Activated CD4-positive, alpha-beta T cell treated with anti-CD3 and anti-CD28 coated beads for 36 hours (primary cell): ENCODE measurements at regions of chr7 and their contacts with region 1.

Region 1: DNA sequence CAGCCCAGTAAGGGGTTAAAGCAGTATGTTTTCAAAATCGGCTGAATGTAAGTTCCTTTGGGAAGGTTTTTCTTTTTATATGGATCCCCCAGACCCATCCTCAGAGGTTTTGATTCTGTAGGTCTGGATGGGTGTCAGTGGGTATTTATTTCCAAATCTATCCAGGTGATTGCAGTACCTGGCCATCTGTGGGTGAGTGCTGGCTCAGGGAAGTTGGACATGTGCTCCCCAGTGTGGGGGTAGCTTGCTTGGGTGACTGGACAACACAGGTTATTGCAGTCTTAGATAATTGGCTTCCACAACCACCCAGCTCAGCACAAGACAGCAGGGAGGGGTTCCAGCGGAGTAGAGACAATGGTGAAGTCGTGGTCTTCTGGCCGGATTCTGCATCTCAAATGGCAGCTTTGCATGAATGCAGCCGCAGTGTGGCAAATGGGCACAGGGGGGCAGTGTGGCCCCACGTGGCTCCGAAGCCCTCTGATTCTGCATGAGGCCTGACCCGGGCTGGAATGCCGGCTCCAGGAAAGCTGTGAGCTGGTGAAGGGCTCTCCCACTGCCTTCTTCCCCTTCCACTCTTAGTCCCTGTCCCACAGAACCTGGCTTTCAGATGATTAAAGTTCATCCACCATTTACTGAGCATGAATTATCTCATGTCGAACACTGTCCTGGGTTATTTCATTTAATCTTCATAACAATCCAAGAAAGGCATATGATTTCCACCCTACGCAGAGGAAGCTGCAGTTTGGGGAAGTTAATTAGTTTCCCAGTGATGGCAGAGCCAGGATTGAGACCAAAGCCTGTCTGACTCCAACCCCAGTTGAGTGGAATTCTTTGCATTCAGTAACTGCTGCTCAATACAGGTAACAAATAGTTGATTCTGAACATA is 64.5 kb upstream of the SYPL1 start:
- DNase-seq: peak; percentile 86
- ATAC-seq: peak; percentile 91
- H3K4me3 Mint-ChIP-seq: no peak overlapping the region
- H3K27ac Mint-ChIP-seq: peak overlapping the region; percentile 4
- H3K4me1 Mint-ChIP-seq: peaks cover 2% of the 10 kb centered on the region
- H3K27me3 Mint-ChIP-seq: peaks cover 10% of the 10 kb centered on the region

Region 2: GRCh38 chr7:105896407-105896911 is 280.2 kb before region 1 on chr7:
- CTCF ChIA-PET with region 1: no interaction called
- POLR2A ChIA-PET with region 1: no interaction called
- intact Hi-C with region 1: no loop called
- DNase-seq: no peak
- ATAC-seq: no peak
- H3K4me3 Mint-ChIP-seq: no peak overlapping the region
- H3K27ac Mint-ChIP-seq: no peak overlapping the region
- H3K4me1 Mint-ChIP-seq: peaks cover 11% of the 10 kb centered on the region
- H3K27me3 Mint-ChIP-seq: peaks cover 3% of the 10 kb centered on the region

Region 3: GRCh38 chr7:106074265-106074664 is 102.4 kb before region 1 on chr7:
- CTCF ChIA-PET with region 1: no interaction called
- POLR2A ChIA-PET with region 1: no interaction called
- intact Hi-C with region 1: no loop called
- DNase-seq: no peak
- ATAC-seq: no peak
- H3K4me3 Mint-ChIP-seq: no peak overlapping the region
- H3K27ac Mint-ChIP-seq: no peak overlapping the region
- H3K4me1 Mint-ChIP-seq: peaks cover 38% of the 10 kb centered on the region
- H3K27me3 Mint-ChIP-seq: no peaks in the 10 kb centered on the region

Region 4: GRCh38 chr7:106367018-106367420 is 190.4 kb after region 1 on chr7:
- CTCF ChIA-PET with region 1: no interaction called
- POLR2A ChIA-PET with region 1: no interaction called
- intact Hi-C with region 1: loop called in 1 of 2 experiments (anchors 5 kb)
- DNase-seq: no peak
- ATAC-seq: peak; percentile 40
- H3K4me3 Mint-ChIP-seq: no peak overlapping the region
- H3K27ac Mint-ChIP-seq: no peak overlapping the region
- H3K4me1 Mint-ChIP-seq: peaks cover 38% of the 10 kb centered on the region
- H3K27me3 Mint-ChIP-seq: peaks cover 20% of the 10 kb centered on the region

Region 5: GRCh38 chr7:106461993-106462859 is 285.6 kb after region 1 on chr7:
- CTCF ChIA-PET with region 1: interaction called, 72 read pairs
- POLR2A ChIA-PET with region 1: no interaction called
- intact Hi-C with region 1: loop called (anchors 1 kb)
- DNase-seq: no peak
- ATAC-seq: peak; percentile 69
- H3K4me3 Mint-ChIP-seq: peak overlapping the region; percentile 8
- H3K27ac Mint-ChIP-seq: peak overlapping the region; percentile 75
- H3K4me1 Mint-ChIP-seq: peaks cover 36% of the 10 kb centered on the region
- H3K27me3 Mint-ChIP-seq: no peaks in the 10 kb centered on the region

Region 6: GRCh38 chr7:106520962-106521940 is 344.6 kb after region 1 on chr7:
- CTCF ChIA-PET with region 1: interaction called, 3 read pairs
- POLR2A ChIA-PET with region 1: no interaction called
- intact Hi-C with region 1: loop called in 1 of 2 experiments (anchors 5 kb)
- DNase-seq: peak; percentile 29
- ATAC-seq: peak; percentile 44
- H3K4me3 Mint-ChIP-seq: no peak overlapping the region
- H3K27ac Mint-ChIP-seq: no peak overlapping the region
- H3K4me1 Mint-ChIP-seq: peaks cover 14% of the 10 kb centered on the region
- H3K27me3 Mint-ChIP-seq: peaks cover 24% of the 10 kb centered on the region

Region 7: DNA sequence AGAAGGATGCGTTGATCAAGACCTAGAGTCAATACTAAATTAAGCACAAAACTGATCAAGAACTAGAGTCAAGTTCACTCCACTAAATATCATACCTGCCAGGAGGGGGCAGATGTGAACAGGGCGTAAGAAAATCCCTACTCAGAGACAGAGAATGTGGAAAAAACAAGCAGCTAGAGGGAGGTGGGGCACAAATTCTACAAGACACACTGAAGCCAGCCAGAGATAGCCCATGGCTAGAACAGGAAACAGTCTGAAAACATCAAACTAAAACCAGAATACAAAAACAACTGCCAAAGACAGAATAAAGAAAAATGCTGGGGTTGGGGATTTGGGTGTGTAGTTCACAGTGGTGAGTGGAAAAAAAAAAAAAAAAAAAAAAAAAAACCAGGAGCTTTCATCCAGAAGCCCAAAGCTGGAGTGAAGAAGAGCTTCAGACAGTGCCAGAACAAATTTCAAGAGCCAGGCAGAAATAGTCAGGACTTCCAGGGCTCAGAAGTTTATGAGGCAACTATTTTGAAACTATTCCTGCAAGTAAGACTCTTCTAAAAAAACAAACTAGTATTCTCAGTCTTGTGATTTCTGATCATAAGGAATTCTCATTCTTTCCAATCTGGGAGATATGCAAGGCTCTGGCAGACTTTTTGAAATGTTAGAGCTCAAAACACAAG is 366.0 kb after region 1 on chr7:
- CTCF ChIA-PET with region 1: interaction called, 3 read pairs
- POLR2A ChIA-PET with region 1: no interaction called
- intact Hi-C with region 1: loop called (anchors 1 to 5 kb)
- DNase-seq: peak; percentile 70
- ATAC-seq: peak; percentile 91
- H3K4me3 Mint-ChIP-seq: no peak overlapping the region
- H3K27ac Mint-ChIP-seq: peak overlapping the region; percentile 4
- H3K4me1 Mint-ChIP-seq: peaks cover 8% of the 10 kb centered on the region
- H3K27me3 Mint-ChIP-seq: peaks cover 3% of the 10 kb centered on the region

Region 8: GRCh38 chr7:106736508-106737201 is 560.0 kb after region 1 on chr7:
- CTCF ChIA-PET with region 1: interaction called, 34 read pairs
- POLR2A ChIA-PET with region 1: interaction called, 3 read pairs
- intact Hi-C with region 1: loop called (anchors 1 kb)
- DNase-seq: peak; percentile 60
- ATAC-seq: peak; percentile 95
- H3K4me3 Mint-ChIP-seq: no peak overlapping the region
- H3K27ac Mint-ChIP-seq: peak overlapping the region; percentile 75
- H3K4me1 Mint-ChIP-seq: peaks cover 37% of the 10 kb centered on the region
- H3K27me3 Mint-ChIP-seq: no peaks in the 10 kb centered on the region